H1 (cell line): ENCODE measurements at regions of chr19 and their contacts with region 1.

Region 1: DNA sequence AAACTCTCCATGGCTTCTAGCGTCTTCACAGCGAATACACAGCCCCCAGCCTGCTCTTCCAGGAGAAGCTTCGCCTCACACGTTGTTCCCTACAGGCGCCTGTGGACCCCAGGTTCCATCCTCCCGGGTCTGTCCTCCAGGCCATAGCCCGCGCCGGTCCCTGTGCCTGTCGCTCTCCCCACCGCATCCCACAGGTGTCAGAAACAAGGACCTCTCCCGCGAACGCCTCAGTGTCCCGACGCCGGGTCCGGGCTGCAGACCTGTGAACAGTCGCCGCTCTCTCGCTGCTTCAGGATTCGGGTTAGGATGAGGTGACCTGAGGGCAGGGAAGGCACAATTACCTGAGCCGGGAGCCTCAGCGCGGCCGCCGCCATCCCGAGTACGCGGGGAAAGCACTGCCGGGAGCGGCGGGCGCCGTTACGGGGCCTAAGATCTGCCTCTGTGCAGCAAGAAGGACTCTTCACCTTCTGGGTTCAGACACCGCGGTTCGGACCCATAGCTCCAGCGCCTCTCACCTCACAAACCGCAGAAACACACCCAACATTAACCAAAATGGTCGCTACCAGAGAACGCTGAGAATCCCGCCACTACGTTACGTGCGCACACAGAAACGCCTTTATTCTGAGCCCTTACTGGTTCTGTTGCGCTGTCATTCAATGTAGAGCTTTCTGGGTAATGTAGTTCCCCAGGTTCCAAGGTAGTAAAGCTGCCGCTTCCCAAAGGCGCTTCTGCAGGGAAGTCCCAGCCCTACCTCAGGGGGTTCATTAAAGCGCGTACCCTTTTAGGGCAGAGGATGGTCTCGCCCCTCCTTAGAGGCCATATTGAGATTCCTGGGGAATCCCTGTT is at the start of gene ZNF418:
- DNase-seq: peak; percentile 60 to 72
- H3K4me3 ChIP-seq: peak within 1 kb of the TSS; percentile 85 to 95 (median 94)
- H3K27ac ChIP-seq: peak within 1 kb of the TSS; percentile 94
- H3K4me1 ChIP-seq: peaks cover 0 to 6% (median 3%) of the 10 kb centered on the region in 4 experiments; a peak in 4 of 7 replicates
- H3K27me3 ChIP-seq: no peaks in the 10 kb centered on the region
- CTCF ChIP-seq: no peak
- EP300 ChIP-seq: peak in 1 of 2 experiments; percentile 89; a peak in 2 of 3 replicates
- POLR2A ChIP-seq: peak; percentile 87 to 89
- RAD21 ChIP-seq: no peak
- total RNA-seq, gene ZNF418: 18.5 and 18.8 TPM in 2 replicates

Region 2: GRCh38 chr19:57946316-57946715 is 11.3 kb after region 1 on chr19:
- CTCF ChIA-PET with region 1: interaction called, 3 read pairs
- POLR2A ChIA-PET with region 1: interaction called, 14 read pairs
- DNase-seq: no peak
- H3K4me3 ChIP-seq: peak overlapping the region; percentile 71 to 98 (median 88); a peak in 7 of 8 replicates
- H3K27ac ChIP-seq: no peak overlapping the region
- H3K4me1 ChIP-seq: peaks cover 0 to 9% (median 2%) of the 10 kb centered on the region in 4 experiments; a peak in 5 of 7 replicates
- H3K27me3 ChIP-seq: no peaks in the 10 kb centered on the region
- CTCF ChIP-seq: no peak
- EP300 ChIP-seq: no peak
- POLR2A ChIP-seq: no peak
- RAD21 ChIP-seq: no peak